ENCODE measurements at regions of chr13 and their contacts with region 1.

Region 1: DNA sequence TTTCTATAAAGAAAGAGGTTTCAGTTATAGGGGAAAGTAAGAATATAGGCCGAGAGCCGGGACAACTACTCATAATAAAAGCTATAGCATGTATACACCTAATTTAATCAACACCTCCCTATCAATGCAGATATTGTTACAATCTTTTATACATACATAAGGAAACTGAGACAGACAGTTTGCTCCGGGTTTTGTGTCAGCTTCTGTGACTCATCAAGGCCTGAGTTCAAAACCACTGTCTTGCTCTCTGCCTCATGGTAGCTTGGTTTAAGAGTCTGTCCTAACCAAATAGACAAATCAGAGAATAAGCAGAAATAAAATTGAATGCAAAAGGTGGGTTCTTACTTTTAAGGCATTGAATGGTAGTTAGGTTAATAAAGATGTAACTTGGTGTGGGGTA is 222.9 kb downstream of the GGACT start:
- DNase-seq: no peak
- ATAC-seq: no peak
- H3K4me3 ChIP-seq: no peak overlapping the region
- H3K27ac ChIP-seq: peak overlapping the region; percentile 93
- H3K4me1 ChIP-seq: peaks cover 31% of the 10 kb centered on the region
- H3K27me3 ChIP-seq: no peaks in the 10 kb centered on the region
- CTCF ChIP-seq: no peak

Region 2: GRCh38 chr13:100128373-100128772 is 237.3 kb before region 1 on chr13:
- CTCF ChIA-PET with region 1: no interaction called
- POLR2A ChIA-PET with region 1: no interaction called
- in situ Hi-C with region 1: no loop called
- intact Hi-C with region 1: no loop called
- DNase-seq: no peak
- ATAC-seq: no peak
- H3K4me3 ChIP-seq: no peak overlapping the region
- H3K27ac ChIP-seq: no peak overlapping the region
- H3K4me1 ChIP-seq: no peaks in the 10 kb centered on the region
- H3K27me3 ChIP-seq: no peaks in the 10 kb centered on the region
- CTCF ChIP-seq: no peak

Region 3: DNA sequence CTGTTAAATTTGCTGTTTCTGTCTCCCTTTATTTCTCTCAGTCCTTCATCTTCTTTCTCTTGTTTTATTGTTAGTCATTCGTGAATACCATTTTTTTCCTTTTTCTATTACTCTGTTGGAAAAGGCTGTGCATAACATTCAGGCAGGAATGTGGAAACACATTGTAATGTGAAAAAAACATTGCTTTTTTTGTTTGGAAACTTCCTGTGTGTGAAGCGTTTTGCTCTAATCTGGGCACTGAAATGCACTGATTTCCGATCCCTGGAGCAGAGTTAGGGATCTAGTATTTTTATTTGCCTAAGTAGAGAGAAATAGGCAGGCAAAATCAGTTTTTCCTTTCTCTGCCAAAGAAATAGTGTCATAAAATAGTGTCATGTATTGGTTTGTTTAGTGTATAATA is 121.2 kb before region 1 on chr13:
- CTCF ChIA-PET with region 1: no interaction called
- POLR2A ChIA-PET with region 1: interaction called, 17 read pairs
- in situ Hi-C with region 1: no loop called
- intact Hi-C with region 1: no loop called
- DNase-seq: no peak
- ATAC-seq: no peak
- H3K4me3 ChIP-seq: no peak overlapping the region
- H3K27ac ChIP-seq: no peak overlapping the region
- H3K4me1 ChIP-seq: no peaks in the 10 kb centered on the region
- H3K27me3 ChIP-seq: no peaks in the 10 kb centered on the region
- CTCF ChIP-seq: no peak

Region 4: GRCh38 chr13:100315522-100315921 is 50.2 kb before region 1 on chr13:
- CTCF ChIA-PET with region 1: no interaction called
- POLR2A ChIA-PET with region 1: no interaction called
- in situ Hi-C with region 1: no loop called
- intact Hi-C with region 1: no loop called
- DNase-seq: no peak
- ATAC-seq: no peak
- H3K4me3 ChIP-seq: no peak overlapping the region
- H3K27ac ChIP-seq: no peak overlapping the region
- H3K4me1 ChIP-seq: no peaks in the 10 kb centered on the region
- H3K27me3 ChIP-seq: no peaks in the 10 kb centered on the region
- CTCF ChIP-seq: no peak

Measured in Panc1 (cell line).